AG04450 (cell line): ENCODE measurements at regions of chr6 and their contacts with region 1.

Region 1: DNA sequence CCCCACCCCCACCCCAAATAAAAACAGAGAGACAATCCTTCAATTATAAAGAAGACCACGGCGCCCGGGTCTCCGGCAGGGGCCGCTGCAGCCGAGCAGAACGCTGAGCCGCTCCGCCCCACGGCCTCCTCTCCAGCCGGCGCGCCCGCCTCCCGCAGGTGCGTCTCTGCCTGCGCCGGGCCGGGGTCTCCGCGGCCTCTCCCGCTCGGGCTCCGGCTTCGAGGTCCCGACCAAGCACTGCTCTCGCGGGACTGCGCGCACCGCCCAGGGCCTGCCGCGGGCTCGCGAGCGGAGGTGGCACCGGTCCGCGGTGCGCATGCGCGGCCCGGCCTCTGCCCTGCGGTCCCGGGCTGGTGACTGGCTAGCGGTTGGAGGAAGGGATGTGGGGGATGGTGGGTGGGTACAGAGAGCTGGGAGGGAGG is 241 bp upstream of the SIRT5 start:
- DNase-seq: peak; percentile 77
- H3K4me3 ChIP-seq: peak overlapping the region; percentile 81
- H3K27ac ChIP-seq: peak overlapping the region; percentile 73
- H3K27me3 ChIP-seq: no peaks in the 10 kb centered on the region
- CTCF ChIP-seq: peak; percentile 42

Region 2: DNA sequence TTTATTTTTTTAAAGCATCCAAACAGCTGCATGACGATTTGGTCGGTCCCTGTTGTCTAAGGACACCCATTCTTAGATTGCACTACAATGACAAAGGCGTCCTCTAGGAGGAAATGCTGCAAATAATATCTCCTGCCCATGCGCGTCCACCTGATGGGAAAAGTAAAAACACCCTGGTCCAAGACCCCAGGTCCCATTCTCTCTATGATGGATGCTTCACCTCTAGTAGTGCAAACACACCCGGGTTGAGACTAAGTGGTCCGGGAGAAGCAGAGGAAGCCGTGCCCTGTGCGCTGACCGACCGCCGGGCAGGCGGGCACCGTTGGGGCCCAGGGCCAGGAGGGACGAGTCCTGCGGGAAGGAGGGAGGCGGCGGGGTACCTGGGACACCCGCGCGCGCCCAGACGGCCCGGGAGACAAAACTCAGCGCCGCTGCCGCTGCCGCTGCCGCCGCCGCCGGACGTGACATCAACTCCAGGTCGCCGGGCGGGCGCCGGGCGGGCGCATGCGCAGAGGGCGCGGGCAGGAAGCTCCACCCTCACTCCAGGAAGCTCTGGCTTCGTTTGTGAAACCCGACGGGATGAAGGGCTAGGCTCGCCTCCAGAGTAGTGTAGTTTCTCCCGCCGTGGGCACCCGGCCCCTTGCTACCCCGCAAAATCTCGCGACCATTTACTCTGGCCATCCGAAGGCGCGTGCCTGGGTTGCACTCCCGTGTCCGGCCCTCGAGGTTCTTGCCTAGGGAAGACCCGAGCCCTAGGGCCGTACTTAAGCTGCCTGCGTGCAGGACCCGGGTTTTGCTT is 245.9 kb before region 1 on chr6 and contains the start of gene TBC1D7:
- CTCF ChIA-PET with region 1: interaction called, 18 read pairs
- POLR2A ChIA-PET with region 1: interaction called, 14 read pairs
- DNase-seq: peak; percentile 55
- H3K4me3 ChIP-seq: peak within 1 kb of the TSS; percentile 92
- H3K27ac ChIP-seq: peak within 1 kb of the TSS; percentile 75
- H3K27me3 ChIP-seq: no peaks in the 10 kb centered on the region
- CTCF ChIP-seq: no peak
- polyA plus RNA-seq, gene TBC1D7: 37.6 and 38.6 TPM in 2 replicates

Region 3: GRCh38 chr6:13355043-13355951 is 218.9 kb before region 1 on chr6:
- CTCF ChIA-PET with region 1: interaction called, 13 read pairs
- POLR2A ChIA-PET with region 1: interaction called, 9 read pairs
- DNase-seq: peak; percentile 95
- H3K4me3 ChIP-seq: no peak overlapping the region
- H3K27ac ChIP-seq: peak overlapping the region; percentile 95
- H3K27me3 ChIP-seq: no peaks in the 10 kb centered on the region
- CTCF ChIP-seq: 0 out of 2 replicates have a peak, but pooled peaks have one; percentile 11

Region 4: GRCh38 chr6:13538084-13538483 is 36.1 kb before region 1 on chr6:
- CTCF ChIA-PET with region 1: interaction called, 16 read pairs
- POLR2A ChIA-PET with region 1: no interaction called
- DNase-seq: peak; percentile 30
- H3K4me3 ChIP-seq: no peak overlapping the region
- H3K27ac ChIP-seq: no peak overlapping the region
- H3K27me3 ChIP-seq: peaks cover 2% of the 10 kb centered on the region
- CTCF ChIP-seq: peak; percentile 56

Region 5: DNA sequence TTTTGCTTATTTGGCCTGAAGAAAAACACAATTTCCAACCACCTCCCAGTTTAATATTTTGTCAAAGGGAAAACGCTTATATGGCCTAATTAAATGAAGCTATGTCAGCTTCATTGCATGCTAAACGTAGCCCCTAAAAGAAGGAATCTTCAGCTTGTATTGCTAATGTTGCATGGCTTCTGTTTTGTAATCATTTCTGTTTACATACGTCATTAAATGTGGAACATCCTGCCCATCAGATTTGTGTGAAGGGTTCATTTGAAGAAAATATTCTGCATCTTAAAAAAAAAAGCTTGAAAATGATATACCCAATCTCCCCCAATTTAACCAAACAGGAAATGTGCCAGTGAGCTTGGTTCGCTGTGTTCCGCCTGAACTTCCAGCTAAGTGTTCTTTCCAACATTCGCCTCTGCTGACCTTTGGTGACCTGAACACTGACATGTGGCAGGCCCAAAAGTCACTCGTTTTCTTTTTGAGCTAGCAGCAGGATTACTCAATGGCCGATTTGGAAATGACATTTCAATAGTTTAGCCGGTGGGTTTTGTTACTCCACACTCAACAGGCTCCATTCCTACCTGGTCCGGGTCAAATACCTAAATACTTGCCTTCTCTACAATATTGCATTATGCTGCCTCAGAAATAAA is 12.4 kb before region 1 on chr6:
- CTCF ChIA-PET with region 1: interaction called, 34 read pairs
- POLR2A ChIA-PET with region 1: no interaction called
- DNase-seq: no peak
- H3K4me3 ChIP-seq: no peak overlapping the region
- H3K27ac ChIP-seq: no peak overlapping the region
- H3K27me3 ChIP-seq: peaks cover 12% of the 10 kb centered on the region
- CTCF ChIP-seq: no peak

Region 6: DNA sequence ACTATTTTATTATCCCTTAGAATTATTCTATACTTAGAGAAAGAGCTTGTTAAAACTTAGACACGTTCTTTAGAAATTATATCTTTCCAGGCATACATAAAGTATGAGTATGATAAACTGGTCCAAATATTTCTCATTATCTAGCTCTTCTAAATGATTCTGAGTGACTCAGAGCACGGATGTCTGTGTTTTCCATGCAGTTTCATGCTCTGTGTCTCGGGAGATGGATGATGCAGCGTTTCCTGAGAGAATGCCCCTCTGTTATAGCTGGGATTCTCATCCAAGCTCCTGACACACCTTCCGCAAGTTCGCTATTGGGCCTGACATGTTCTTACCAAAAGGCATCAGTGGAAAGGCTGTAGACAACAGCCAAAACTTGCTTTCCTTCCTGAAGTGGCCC is 19.6 kb after region 1 on chr6:
- CTCF ChIA-PET with region 1: interaction called, 28 read pairs
- POLR2A ChIA-PET with region 1: no interaction called
- DNase-seq: no peak
- H3K4me3 ChIP-seq: no peak overlapping the region
- H3K27ac ChIP-seq: no peak overlapping the region
- H3K27me3 ChIP-seq: no peaks in the 10 kb centered on the region
- CTCF ChIP-seq: no peak

Region 7: DNA sequence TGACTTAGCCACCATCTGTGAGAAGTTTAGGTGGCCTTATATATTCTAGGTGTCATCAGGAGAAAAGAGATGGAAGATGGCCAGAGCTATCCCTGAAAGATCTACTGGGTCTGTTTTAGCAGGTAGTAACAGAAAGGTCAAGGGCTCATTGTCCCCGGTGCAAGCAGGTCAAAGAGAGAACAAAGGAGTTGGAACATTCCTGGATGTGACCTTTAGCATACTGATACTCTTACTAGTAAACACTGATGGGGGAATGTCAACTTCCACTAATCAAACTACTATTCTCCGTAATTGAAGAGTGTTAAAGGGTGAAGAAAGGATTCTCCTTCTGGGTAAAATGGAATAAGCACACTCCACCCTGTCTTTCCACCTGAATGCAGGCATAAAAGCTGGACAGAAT is 244.2 kb after region 1 on chr6:
- CTCF ChIA-PET with region 1: no interaction called
- POLR2A ChIA-PET with region 1: no interaction called
- DNase-seq: no peak
- H3K4me3 ChIP-seq: no peak overlapping the region
- H3K27ac ChIP-seq: no peak overlapping the region
- H3K27me3 ChIP-seq: peaks cover under 1% of the 10 kb centered on the region
- CTCF ChIP-seq: no peak